GM12878 (cell line): ENCODE measurements at regions of chr12 and their contacts with region 1.

Region 1: DNA sequence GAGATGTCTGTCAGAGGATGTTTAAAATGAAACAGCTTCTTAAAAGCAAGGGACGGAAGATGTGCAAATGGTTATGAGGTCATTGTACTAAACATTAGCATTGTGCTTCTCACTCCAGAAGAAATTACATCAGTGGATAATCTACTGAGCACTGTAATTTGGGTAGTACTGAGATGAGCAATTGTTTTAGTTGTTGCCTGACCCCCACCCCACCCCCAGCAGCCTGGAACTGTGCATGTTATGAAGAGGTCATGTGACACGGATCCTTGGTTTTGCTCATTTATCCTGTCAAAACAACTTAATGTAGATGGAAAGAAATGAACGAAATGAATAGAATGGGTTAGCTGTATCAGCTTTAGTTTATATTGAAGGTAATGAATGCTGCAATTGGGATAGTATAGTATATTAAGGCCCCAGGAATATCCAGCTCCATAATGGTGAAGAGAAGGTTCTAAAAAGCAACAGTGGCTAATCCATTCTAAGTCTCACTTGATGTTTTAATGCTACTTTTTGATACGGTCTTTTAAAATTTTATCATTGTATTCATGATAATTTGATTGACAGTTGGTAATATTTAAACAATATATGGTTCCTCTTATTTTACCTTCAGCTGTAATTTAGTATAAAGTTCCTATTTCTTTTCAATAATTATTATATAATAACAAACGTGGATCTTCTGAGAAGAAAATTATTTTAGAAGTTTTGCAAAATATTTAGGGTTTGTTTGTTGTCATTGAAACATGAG is 58.5 kb downstream of the WNK1 start:
- DNase-seq: no peak
- ATAC-seq: peak; percentile 78
- H3K4me3 ChIP-seq: peak overlapping the region; percentile 5; the same call in 1 of the 2 replicates
- H3K27ac ChIP-seq: peak overlapping the region; percentile 9; the same call in 1 of the 2 replicates
- H3K4me1 ChIP-seq: peaks cover 49% of the 10 kb centered on the region
- H3K27me3 ChIP-seq: no peaks in the 10 kb centered on the region
- CTCF ChIP-seq: no peak
- EP300 ChIP-seq: peak; percentile 61 to 70; a peak in 2 of 4 replicates
- POLR2A ChIP-seq: no peak
- RAD21 ChIP-seq: no peak

Region 2: DNA sequence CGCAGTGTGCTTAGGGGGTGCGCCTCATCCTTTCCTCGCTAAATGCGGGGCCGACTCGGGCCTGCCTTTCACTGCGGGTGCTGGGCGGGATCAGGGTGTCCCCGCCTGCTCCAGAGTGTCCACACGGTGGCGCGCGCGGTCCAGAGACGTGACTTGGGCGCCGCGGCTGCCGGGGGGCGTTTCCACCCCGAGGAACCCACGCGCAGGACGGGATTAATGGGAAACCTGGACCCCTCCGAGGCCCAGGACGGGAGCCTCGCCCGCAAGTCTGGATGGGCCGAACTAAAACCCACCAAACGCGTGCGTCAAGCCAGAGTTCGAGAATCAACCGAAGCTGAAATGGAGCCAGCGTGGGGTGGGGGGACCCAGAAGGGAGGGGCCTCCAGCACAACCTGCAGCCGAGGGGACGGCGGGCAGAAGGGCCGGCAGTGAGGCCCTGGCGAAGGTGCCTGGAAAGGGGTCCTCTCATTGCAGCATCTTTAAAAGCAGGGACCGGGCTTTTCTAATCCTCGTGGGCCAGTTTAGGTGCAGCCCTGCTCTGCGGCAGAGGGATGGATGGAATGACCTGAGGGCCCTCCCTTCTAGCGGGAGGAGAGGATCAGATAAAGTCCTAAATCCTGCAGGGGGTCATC is 240.9 kb before region 1 on chr12:
- CTCF ChIA-PET with region 1: interaction called, 77 read pairs
- POLR2A ChIA-PET with region 1: interaction called, 3 read pairs
- RAD21 ChIA-PET with region 1: interaction called, 37 read pairs
- SMC1A ChIA-PET with region 1: interaction called, 39 read pairs
- in situ Hi-C with region 1: loop called (anchors 5 kb)
- intact Hi-C with region 1: loop called (anchors 2 kb)
- DNase-seq: no peak
- ATAC-seq: peak; percentile 97
- H3K4me3 ChIP-seq: peak overlapping the region; percentile 64
- H3K27ac ChIP-seq: no peak overlapping the region
- H3K4me1 ChIP-seq: no peaks in the 10 kb centered on the region
- H3K27me3 ChIP-seq: no peaks in the 10 kb centered on the region
- CTCF ChIP-seq: peak; percentile 91 to 94 (median 92)
- EP300 ChIP-seq: no peak
- POLR2A ChIP-seq: no peak
- RAD21 ChIP-seq: peak; percentile 92

Region 3: DNA sequence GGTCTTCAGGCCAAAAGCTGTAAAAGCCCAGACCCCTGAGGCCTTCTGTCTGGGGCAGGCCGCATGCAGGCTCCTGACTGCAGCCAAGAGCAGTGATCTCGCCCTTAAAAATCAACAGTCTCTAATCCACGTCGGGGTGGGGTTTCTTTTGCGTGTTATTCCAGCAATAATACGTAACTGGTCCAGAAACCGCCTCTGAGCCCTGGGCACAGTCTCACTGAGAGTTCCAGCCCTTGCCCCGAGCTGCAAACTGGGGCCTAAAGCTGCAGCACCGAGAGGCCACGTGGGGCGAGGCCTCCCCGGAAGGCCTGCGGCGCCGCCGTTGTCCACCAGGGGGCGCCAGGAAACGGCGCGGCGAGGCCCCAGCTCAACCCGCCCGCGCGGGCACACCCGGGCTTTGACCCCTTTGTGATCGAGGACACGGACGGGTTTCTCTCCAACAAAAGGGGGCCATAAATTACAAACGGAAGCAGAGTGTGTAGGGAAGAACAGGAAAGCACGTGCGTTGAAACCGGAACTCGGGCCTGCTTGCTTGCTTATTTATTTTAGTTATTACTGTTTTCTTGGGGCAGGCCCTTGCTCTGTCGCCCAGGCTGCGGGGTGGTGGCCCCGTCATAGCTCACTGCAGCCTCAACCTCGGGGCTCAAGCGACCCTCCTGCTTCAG is 234.8 kb before region 1 on chr12:
- CTCF ChIA-PET with region 1: interaction called, 77 read pairs
- POLR2A ChIA-PET with region 1: interaction called, 4 read pairs
- RAD21 ChIA-PET with region 1: interaction called, 37 read pairs
- SMC1A ChIA-PET with region 1: interaction called, 39 read pairs
- in situ Hi-C with region 1: loop called (anchors 5 kb)
- intact Hi-C with region 1: loop called (anchors 1 kb)
- DNase-seq: peak; percentile 40
- ATAC-seq: peak; percentile 99
- H3K4me3 ChIP-seq: no peak overlapping the region
- H3K27ac ChIP-seq: peak overlapping the region; percentile 26
- H3K4me1 ChIP-seq: peaks cover 10% of the 10 kb centered on the region
- H3K27me3 ChIP-seq: no peaks in the 10 kb centered on the region
- CTCF ChIP-seq: peak; percentile 90 to 99 (median 96)
- EP300 ChIP-seq: no peak
- POLR2A ChIP-seq: peak; percentile 59
- RAD21 ChIP-seq: peak; percentile 79

Region 4: GRCh38 chr12:614411-614970 is 196.4 kb before region 1 on chr12:
- CTCF ChIA-PET with region 1: interaction called, 85 read pairs
- POLR2A ChIA-PET with region 1: interaction called, 7 read pairs
- RAD21 ChIA-PET with region 1: interaction called, 40 read pairs
- SMC1A ChIA-PET with region 1: interaction called, 67 read pairs
- in situ Hi-C with region 1: no loop called
- intact Hi-C with region 1: loop called (anchors 1 kb)
- DNase-seq: no peak
- ATAC-seq: peak; percentile 78
- H3K4me3 ChIP-seq: no peak overlapping the region
- H3K27ac ChIP-seq: no peak overlapping the region
- H3K4me1 ChIP-seq: peaks cover 10% of the 10 kb centered on the region
- H3K27me3 ChIP-seq: no peaks in the 10 kb centered on the region
- CTCF ChIP-seq: peak; percentile 61 to 86 (median 63)
- EP300 ChIP-seq: no peak
- POLR2A ChIP-seq: no peak
- RAD21 ChIP-seq: peak; percentile 75

Region 5: DNA sequence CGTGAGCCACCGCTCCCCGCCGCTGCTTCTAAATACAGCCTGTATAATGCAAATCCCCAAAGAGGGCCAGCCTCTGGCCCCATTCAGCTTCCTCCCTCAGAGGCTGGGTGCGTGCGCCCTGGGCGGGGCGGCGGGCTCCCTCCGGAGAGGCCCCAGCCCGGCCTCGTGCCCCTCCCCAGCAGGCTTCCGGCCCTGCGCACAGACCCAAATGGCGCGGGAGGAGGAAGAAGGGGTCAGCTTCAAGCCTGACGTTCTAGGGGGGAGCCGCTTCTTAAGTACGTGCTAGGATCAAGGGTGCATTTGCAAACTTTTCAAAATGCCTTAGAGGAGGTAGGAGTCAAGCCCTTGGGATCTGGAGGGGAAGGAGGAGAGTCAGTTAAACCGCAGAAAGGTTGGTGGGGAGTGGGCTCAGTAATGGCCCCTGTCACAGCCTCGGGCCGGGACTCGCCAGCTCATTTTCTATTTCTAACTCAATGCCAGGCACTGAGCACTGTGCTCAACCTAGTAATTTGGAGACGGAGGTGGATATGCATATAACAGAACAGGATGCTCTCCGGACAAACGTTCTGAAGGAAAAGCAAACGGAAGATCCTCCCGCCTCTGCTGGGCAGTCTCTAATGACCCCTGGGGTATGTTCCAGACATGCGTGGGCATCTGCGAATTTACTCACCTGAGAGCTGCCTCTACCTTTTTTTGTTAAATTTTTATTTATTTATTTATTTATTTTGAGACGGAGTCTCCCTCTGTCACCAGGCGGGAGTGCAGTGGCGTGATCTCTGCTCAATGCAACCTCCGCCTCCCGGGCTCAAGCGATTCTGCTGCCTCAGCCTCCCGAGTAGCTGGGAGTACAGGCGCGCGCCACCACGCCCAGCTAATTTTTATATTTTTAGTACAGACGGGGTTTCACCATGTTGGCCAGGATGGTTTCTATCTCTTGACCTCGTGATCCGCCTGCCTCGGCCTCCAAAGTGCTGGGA is 179.9 kb before region 1 on chr12:
- CTCF ChIA-PET with region 1: interaction called, 7 read pairs
- POLR2A ChIA-PET with region 1: interaction called, 6 read pairs
- RAD21 ChIA-PET with region 1: interaction called, 3 read pairs
- SMC1A ChIA-PET with region 1: interaction called, 8 read pairs
- in situ Hi-C with region 1: no loop called
- intact Hi-C with region 1: loop called (anchors 5 kb)
- DNase-seq: no peak
- ATAC-seq: peak; percentile 98
- H3K4me3 ChIP-seq: peak overlapping the region; percentile 60
- H3K27ac ChIP-seq: peak overlapping the region; percentile 92
- H3K4me1 ChIP-seq: peaks cover 16% of the 10 kb centered on the region
- H3K27me3 ChIP-seq: no peaks in the 10 kb centered on the region
- CTCF ChIP-seq: no peak
- EP300 ChIP-seq: no peak
- POLR2A ChIP-seq: peak; percentile 86
- RAD21 ChIP-seq: no peak

Region 6: DNA sequence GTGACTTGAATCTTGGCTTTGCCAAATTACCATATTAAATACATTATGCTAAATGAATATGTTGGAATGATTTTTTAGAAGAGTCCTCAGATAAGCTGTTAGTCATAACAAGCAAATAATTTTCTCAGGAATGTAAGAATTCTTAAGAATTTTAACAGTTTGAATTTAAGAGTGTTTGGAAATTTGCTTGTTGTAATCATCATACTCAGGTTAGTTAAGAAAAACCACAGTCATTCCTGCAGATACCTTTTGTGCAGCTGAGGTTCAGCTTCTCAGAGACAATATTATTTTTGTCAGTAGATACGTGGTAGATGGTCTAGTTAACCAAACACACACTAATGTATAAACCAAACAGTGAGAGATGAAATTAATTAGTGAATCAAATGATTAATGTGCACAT is 49.6 kb before region 1 on chr12:
- CTCF ChIA-PET with region 1: interaction called, 64 read pairs
- POLR2A ChIA-PET with region 1: interaction called, 10 read pairs
- RAD21 ChIA-PET with region 1: interaction called, 16 read pairs
- SMC1A ChIA-PET with region 1: interaction called, 73 read pairs
- in situ Hi-C with region 1: no loop called
- intact Hi-C with region 1: loop called (anchors 2 kb)
- DNase-seq: no peak
- ATAC-seq: no peak
- H3K4me3 ChIP-seq: peak overlapping the region; percentile 28
- H3K27ac ChIP-seq: no peak overlapping the region
- H3K4me1 ChIP-seq: no peaks in the 10 kb centered on the region; the same call in 1 of the 2 replicates
- H3K27me3 ChIP-seq: no peaks in the 10 kb centered on the region
- CTCF ChIP-seq: no peak
- EP300 ChIP-seq: no peak
- POLR2A ChIP-seq: no peak
- RAD21 ChIP-seq: no peak

Region 7: GRCh38 chr12:789852-790563 is 20.8 kb before region 1 on chr12:
- CTCF ChIA-PET with region 1: interaction called, 16 read pairs
- POLR2A ChIA-PET with region 1: interaction called, 3 read pairs
- RAD21 ChIA-PET with region 1: interaction called, 4 read pairs
- SMC1A ChIA-PET with region 1: interaction called, 11 read pairs
- in situ Hi-C with region 1: no loop called
- intact Hi-C with region 1: no loop called
- DNase-seq: no peak
- ATAC-seq: peak; percentile 71
- H3K4me3 ChIP-seq: no peak overlapping the region
- H3K27ac ChIP-seq: peak overlapping the region; percentile 5; the same call in 1 of the 2 replicates
- H3K4me1 ChIP-seq: peaks cover 20% of the 10 kb centered on the region
- H3K27me3 ChIP-seq: no peaks in the 10 kb centered on the region
- CTCF ChIP-seq: no peak
- EP300 ChIP-seq: no peak
- POLR2A ChIP-seq: no peak
- RAD21 ChIP-seq: no peak